Mammary epithelial cell (primary cell): ENCODE measurements at regions of chr16 and their contacts with region 1.

Region 1: DNA sequence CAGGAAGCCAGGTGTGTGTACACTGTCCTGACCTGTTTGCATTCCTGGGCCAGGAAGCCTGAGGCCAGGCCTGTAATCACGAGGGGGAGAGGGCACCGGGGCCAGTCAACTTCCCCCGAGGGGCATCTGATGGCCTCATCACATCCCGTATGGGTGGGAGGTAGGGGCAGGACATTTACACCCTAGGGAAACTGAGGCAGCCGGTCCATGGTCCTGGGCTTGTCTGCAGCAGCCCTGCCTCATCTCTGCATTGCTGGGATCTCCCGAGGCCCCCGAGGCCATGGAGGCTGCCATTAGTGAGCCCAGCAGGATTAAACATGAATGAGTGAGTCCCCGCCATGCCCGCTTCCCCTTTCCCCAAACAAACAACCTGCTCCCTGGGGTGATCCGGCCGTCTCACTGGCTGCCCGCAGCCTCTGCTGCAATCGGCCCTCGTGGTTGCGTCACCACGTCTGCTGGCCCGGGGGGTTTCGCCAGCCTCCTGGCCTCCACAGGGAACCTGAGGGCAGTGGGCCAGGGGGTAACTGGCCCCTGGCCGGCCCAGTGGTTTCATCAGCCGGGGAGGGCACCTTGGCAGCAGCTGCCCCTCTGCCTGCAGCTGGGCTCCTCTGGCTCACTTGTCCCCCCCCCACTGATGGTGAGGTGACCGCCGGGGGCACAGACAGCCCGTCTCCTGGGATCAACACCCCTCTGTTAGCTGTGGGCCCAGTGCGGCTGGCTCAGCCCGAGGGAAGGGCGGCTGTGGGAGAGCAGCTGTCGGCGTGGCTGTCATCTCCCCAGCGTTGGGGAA is 88.3 kb upstream of the GSE1 start:
- DNase-seq: peak; percentile 53
- H3K4me3 ChIP-seq: no peak overlapping the region
- H3K27ac ChIP-seq: peak overlapping the region; percentile 31
- H3K4me1 ChIP-seq: peaks cover 39% of the 10 kb centered on the region
- H3K27me3 ChIP-seq: no peaks in the 10 kb centered on the region
- CTCF ChIP-seq: no peak

Region 2: DNA sequence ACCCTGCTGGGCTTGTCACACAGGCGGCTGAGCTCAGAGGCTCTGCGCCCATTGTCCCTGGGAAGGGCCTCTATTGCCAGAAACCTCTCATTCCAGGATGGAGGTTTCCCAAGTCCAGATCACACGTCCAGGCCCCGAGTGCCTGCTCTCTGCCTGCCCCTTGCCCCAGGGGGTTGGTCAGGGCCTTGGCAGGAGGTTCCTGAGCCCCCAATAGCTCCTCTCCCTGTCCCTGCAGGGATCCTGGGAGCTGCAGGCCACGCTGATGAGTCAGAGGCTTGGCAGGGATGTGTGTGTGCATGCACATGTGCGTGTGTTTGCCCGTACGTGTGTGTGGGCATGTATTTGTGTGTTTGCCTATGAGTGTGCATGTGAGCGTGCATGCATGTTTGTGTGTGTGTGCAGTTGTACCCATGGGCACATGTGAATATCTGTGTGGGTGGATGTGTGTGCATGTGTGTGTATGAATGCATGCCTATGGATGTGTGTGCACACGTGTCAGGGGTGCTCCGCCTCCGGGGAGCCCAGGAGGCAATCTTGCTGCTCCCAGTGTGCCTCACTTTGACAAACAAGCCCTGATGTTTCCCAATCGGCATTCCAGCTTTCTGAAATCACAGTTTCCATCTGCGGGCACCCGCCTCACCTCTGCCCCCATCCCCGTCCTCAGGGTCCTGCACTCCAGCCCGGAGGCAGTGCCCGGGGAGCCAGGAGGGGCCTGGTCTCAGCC is 10.1 kb before region 1 on chr16:
- CTCF ChIA-PET with region 1: no interaction called
- dilution Hi-C with region 1: no loop called
- in situ Hi-C with region 1: no loop called
- intact Hi-C with region 1: loop called (anchors 1 kb)
- DNase-seq: peak; percentile 85
- H3K4me3 ChIP-seq: no peak overlapping the region
- H3K27ac ChIP-seq: peak overlapping the region; percentile 56
- H3K4me1 ChIP-seq: peaks cover 21% of the 10 kb centered on the region
- H3K27me3 ChIP-seq: no peaks in the 10 kb centered on the region
- CTCF ChIP-seq: peak in 1 of 2 donors; percentile 18

Region 3: DNA sequence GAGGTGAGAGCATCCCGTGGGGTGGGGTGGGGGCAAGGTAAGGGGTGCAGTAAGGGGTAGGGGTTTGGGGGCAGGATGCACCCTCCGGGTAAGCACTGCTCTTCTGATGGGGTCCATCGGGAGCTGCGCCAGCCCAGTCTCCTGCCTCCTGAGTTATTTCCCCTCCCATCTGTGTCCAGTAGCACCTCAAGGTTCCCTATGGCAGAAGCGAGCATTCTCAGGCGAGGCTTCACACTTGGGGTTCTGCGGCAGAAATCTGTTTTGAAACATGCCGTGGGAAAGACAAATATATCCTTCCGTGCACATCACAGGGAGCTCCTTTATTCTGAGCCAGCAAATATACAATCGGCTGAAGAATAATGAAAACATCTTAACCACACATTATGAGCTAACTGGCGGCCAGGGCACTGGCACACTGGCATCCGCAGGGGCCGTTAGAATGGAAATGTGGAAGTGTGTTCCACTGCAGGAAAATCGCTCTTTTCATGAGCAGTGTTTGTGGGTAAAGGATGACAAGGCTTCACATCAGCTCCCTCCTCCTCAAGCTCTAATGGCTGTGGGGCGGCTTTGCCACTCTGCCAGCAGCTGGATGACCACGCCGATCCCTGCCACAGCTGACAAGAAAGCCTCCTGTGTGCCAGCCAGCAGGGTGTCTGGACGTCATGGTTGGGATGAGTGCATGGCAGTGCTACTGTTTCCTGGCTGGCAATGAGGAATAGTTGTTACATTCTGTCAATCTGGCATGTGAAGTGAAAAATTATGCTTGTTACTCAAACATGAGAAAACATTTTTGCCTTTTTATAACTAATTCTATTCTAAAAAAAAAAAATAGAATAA is 1010.2 kb after region 1 on chr16:
- CTCF ChIA-PET with region 1: no interaction called
- dilution Hi-C with region 1: no loop called
- in situ Hi-C with region 1: no loop called
- intact Hi-C with region 1: no loop called
- DNase-seq: no peak
- H3K4me3 ChIP-seq: no peak overlapping the region
- H3K27ac ChIP-seq: no peak overlapping the region
- H3K4me1 ChIP-seq: no peaks in the 10 kb centered on the region
- H3K27me3 ChIP-seq: no peaks in the 10 kb centered on the region
- CTCF ChIP-seq: no peak